ENCODE measurements at regions of chr6 and their contacts with region 1.

Region 1: DNA sequence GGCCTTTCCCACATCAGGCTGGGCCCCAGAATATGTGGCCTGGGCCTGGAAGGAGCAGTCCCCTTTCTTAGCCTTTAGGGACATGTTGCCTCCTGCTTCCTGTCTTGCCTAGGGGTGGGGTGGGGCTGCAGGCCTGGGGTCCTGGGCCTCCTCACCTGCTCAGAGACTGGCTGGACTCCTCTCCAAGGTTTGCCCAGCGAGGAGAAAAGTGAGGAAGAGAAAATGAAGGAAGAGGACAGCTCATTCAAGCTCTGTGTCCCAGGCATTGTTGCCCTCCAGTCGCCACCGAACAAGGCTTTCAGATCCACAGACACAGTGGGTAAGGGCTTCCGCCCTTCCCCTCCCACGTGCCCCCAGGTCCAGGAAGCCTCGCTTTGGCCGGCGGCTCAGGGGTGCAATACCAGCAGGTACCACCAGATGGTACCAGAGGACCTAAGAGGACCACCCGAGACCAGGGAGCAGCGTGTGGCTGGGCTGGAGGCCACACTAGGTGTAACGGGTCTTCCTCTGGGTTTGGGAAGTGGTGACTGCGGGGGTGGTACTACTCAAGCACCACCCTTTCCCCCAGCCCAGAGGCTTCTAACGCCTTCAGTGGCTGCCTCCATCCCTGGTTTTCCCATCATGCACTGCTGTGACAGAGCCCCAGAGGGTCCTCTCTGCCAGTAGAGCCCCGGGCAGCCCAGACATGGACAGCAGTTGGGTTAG is 5.5 kb upstream of the BAK1 start:
- DNase-seq: peak; percentile 75 to 95 (median 83)
- ATAC-seq: peak; percentile 89 to 94
- H3K4me3 Mint-ChIP-seq: peak overlapping the region; percentile 43 to 75 (median 58)
- H3K27ac Mint-ChIP-seq: peak overlapping the region; percentile 77 to 95 (median 93)
- H3K4me1 Mint-ChIP-seq: peaks cover 5 to 33% (median 21%) of the 10 kb centered on the region in 4 donors
- H3K27me3 Mint-ChIP-seq: no peaks in the 10 kb centered on the region

Region 2: GRCh38 chr6:33599413-33599911 is 13.9 kb after region 1 on chr6:
- POLR2A ChIA-PET with region 1: interaction called, 13 read pairs
- DNase-seq: no peak
- ATAC-seq: no peak
- H3K4me3 Mint-ChIP-seq: peak overlapping the region in 2 of 10 donors; percentile 22 to 33
- H3K27ac Mint-ChIP-seq: peak overlapping the region in 6 of 10 donors; percentile 19 to 88 (median 73)
- H3K4me1 Mint-ChIP-seq: peaks cover 5 to 36% (median 15%) of the 10 kb centered on the region in 4 donors
- H3K27me3 Mint-ChIP-seq: peaks cover 0 to 4% (median 0%) of the 10 kb centered on the region in 5 donors

Region 3: DNA sequence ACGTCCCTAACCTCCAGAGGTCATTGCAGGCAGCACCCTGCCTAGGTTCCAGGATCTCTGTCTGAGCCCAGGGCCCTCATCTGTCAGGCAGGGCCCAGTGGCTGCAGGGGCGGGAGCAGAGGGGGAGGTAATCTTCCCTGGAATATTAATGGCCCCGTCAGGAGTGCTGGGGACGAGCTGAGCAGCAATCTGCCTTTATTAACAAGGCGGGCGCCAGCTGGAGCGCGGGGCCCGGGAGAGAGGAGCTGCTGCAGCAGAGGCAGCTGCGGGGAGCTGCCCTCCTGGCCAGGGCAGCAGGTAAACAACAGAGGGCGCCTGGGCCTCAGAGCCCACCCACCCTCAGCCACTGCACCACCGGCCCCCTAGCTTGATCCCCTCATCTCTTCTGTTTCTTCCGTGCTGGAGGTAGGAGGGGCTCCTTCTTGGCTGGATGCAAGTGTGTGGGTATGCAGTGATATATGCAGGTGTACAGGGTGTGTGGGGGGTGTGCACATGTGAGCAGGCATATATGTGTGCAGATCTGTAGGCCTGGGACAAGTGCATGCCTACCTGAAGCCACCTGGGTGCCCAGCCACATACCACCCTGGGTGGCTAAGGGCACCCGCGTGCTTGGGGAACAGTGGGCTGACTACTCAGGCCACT is 350.0 kb after region 1 on chr6:
- POLR2A ChIA-PET with region 1: no interaction called
- DNase-seq: peak in 1 of 10 donors; percentile 52
- ATAC-seq: no peak
- H3K4me3 Mint-ChIP-seq: no peak overlapping the region
- H3K27ac Mint-ChIP-seq: no peak overlapping the region
- H3K4me1 Mint-ChIP-seq: peaks cover 0 to 17% (median 6%) of the 10 kb centered on the region in 4 donors
- H3K27me3 Mint-ChIP-seq: peaks cover 0 to 4% (median 0%) of the 10 kb centered on the region in 5 donors

Measured in naive thymus-derived CD8-positive, alpha-beta T cell (primary cell).